ENCODE measurements at regions of chr1 and their contacts with region 1.

Region 1: DNA sequence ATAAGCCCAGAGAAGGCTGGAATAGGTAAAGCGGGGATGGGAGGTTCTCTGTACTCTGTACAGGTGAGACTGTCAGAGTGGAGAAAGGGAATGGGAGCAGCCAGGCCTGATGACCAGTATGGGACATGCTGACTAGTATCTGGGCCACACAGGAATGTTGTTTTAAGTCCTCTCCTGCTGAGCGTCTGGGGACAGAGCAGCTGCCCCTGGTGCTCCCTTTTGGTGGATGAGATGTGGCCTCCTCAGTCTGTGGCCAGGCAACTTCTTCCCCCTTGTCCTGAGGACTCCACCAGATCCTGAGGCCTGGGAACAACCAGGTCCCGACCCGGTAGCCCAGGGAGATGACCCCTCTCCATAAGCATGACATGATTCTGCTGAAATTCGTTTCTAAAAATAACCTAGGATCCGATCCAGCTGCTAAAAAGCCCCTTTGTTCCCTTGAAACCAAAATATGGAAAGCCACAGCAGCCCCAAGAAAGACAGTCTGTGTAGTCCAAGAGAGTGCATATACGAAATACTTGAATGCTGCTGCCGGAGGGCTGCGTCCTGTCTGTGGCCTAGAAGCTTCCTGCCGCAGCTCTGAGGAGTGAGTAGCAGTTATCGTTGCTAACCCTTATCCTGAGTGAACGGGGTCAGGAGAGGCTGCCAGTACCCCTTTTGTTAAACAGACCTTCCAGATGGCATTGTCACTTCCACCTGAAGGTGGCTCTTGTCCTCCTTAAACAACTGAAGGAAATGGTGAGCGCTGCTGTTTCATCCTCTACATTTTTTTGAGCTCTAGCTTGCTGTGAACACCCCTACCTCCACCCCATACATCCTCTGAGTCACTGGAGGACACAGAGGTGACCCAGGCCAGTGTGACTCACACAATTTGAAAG is 47.2 kb downstream of the ATP2B4 start:
- DNase-seq: peak; percentile 89
- ATAC-seq: peak; percentile 92
- H3K4me3 Mint-ChIP-seq: peak overlapping the region; percentile 63
- H3K27ac Mint-ChIP-seq: peak overlapping the region; percentile 93
- H3K4me1 Mint-ChIP-seq: peaks cover 60% of the 10 kb centered on the region
- H3K27me3 Mint-ChIP-seq: no peaks in the 10 kb centered on the region

Region 2: DNA sequence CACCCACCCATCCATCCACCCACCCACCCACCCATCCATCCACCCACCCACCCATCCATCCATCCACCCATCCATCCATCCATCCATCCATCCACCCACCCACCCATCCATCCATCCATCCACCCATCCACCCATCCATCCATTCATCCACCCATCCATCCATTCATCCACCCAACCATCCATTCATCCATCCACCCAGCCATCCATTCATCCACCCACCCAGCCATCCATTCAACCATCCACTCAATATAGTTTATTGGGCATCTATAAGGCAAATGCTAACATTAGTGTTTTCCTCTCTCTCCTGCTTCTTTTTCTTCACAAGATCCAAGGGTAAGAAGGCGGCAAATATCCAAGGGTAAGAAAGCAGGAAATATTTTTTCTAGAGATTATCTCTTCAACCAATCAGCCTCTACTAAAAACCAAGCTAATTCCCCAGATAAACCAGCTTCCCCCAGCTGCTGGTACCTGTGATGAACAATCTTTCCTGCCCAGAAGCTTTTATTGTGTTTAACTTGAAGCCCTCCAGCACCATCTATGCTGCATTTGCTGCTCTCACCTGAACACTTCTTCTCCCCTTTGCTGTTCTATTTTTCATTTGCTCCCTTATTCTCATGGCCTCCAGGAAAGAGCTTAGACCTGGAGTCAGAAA is 69.7 kb before region 1 on chr1:
- CTCF ChIA-PET with region 1: interaction called, 11 read pairs
- POLR2A ChIA-PET with region 1: interaction called, 3 read pairs
- DNase-seq: no peak
- ATAC-seq: no peak
- H3K4me3 Mint-ChIP-seq: no peak overlapping the region
- H3K27ac Mint-ChIP-seq: no peak overlapping the region
- H3K4me1 Mint-ChIP-seq: peaks cover 52% of the 10 kb centered on the region
- H3K27me3 Mint-ChIP-seq: no peaks in the 10 kb centered on the region

Region 3: GRCh38 chr1:203649999-203650855 is 23.6 kb before region 1 on chr1:
- CTCF ChIA-PET with region 1: interaction called, 45 read pairs
- POLR2A ChIA-PET with region 1: interaction called, 11 read pairs
- DNase-seq: peak; percentile 70
- ATAC-seq: peak; percentile 76
- H3K4me3 Mint-ChIP-seq: peak overlapping the region; percentile 63
- H3K27ac Mint-ChIP-seq: peak overlapping the region; percentile 76
- H3K4me1 Mint-ChIP-seq: peaks cover 77% of the 10 kb centered on the region
- H3K27me3 Mint-ChIP-seq: no peaks in the 10 kb centered on the region

Region 4: GRCh38 chr1:203692565-203693470 is 19.0 kb after region 1 on chr1:
- CTCF ChIA-PET with region 1: interaction called, 11 read pairs
- POLR2A ChIA-PET with region 1: no interaction called
- DNase-seq: no peak
- ATAC-seq: no peak
- H3K4me3 Mint-ChIP-seq: no peak overlapping the region
- H3K27ac Mint-ChIP-seq: peak overlapping the region; percentile 56
- H3K4me1 Mint-ChIP-seq: peaks cover 19% of the 10 kb centered on the region
- H3K27me3 Mint-ChIP-seq: no peaks in the 10 kb centered on the region